AG04450 (cell line): ENCODE measurements at regions of chr1 and their contacts with region 1.

Region 1: GRCh38 chr1:87292684-87293493 is 35.8 kb upstream of the LMO4 start:
- DNase-seq: peak; percentile 27
- H3K4me3 ChIP-seq: no peak overlapping the region
- H3K27ac ChIP-seq: no peak overlapping the region
- H3K27me3 ChIP-seq: peaks cover 2% of the 10 kb centered on the region
- CTCF ChIP-seq: peak; percentile 76

Region 2: DNA sequence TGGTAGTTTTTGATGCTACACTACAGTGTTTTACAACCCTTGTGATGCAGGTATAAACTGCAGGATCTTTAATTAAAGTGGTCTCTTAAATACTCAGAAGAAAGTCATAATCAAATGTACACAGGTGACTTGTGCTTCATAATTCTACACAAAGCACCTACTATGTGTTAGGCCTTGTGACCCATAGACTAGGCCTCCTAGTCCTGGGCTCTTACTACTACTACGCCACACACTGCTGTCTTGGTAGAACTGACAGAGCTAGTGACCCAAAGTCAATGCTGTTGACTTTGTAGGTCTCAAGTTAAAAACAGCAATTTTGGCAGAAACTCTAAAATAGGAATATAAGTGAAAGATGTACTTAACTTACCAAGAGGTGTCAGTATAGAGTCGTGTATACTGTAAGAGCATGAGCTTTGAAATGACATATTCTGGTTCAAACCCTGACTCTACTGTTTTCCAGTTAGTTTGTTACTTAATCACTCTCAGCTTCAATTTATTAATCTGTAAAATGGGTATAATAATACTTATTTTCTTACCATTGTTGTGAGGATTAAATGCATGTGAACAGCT is 12.8 kb before region 1 on chr1:
- CTCF ChIA-PET with region 1: interaction called, 11 read pairs
- POLR2A ChIA-PET with region 1: no interaction called
- DNase-seq: no peak
- H3K4me3 ChIP-seq: no peak overlapping the region
- H3K27ac ChIP-seq: no peak overlapping the region
- H3K27me3 ChIP-seq: peaks cover 5% of the 10 kb centered on the region
- CTCF ChIP-seq: 0 out of 2 replicates have a peak, but pooled peaks have one; percentile 7

Region 3: GRCh38 chr1:87305762-87306161 is 12.9 kb after region 1 on chr1:
- CTCF ChIA-PET with region 1: interaction called, 40 read pairs
- POLR2A ChIA-PET with region 1: no interaction called
- DNase-seq: no peak
- H3K4me3 ChIP-seq: no peak overlapping the region
- H3K27ac ChIP-seq: no peak overlapping the region
- H3K27me3 ChIP-seq: peaks cover 14% of the 10 kb centered on the region
- CTCF ChIP-seq: no peak

Region 4: GRCh38 chr1:88061492-88062177 is 768.7 kb after region 1 on chr1:
- CTCF ChIA-PET with region 1: interaction called, 12 read pairs
- POLR2A ChIA-PET with region 1: no interaction called
- DNase-seq: peak; percentile 20
- H3K4me3 ChIP-seq: no peak overlapping the region
- H3K27ac ChIP-seq: no peak overlapping the region
- H3K27me3 ChIP-seq: no peaks in the 10 kb centered on the region
- CTCF ChIP-seq: peak; percentile 81

Region 5: DNA sequence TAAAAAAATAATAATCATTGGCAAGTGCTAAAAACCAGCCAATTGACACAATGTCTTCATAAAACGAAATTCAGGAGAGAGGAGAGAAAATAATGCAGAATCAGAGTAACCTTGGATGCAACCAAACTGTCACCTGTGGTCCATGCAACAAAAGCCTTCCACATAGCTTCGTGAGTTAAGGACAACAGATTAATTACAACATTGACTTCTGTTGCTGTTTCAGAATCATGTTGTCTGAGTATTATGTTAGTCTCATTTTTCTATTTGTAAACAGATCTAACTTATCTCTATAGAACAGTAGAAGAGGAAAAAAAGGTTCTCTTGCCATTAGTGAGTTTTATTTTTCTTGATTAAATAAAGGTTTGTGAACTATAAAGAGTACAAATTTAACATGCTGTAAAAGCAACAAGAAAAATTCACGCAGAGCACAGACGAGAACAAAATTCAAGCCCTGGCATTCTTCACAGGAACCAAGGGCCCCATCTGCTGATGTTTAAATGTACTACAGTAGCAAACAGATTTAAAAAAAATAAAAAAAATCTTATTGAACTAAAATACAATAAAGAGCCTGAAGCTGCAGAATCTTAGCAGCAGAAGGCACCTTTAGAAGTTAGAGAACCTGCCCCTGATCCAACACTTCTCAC is 1010.1 kb after region 1 on chr1:
- CTCF ChIA-PET with region 1: interaction called, 39 read pairs
- POLR2A ChIA-PET with region 1: no interaction called
- DNase-seq: peak; percentile 24
- H3K4me3 ChIP-seq: no peak overlapping the region
- H3K27ac ChIP-seq: no peak overlapping the region
- H3K27me3 ChIP-seq: no peaks in the 10 kb centered on the region
- CTCF ChIP-seq: peak; percentile 66